ENCODE measurements at regions of chr2 and their contacts with region 1.

Region 1: DNA sequence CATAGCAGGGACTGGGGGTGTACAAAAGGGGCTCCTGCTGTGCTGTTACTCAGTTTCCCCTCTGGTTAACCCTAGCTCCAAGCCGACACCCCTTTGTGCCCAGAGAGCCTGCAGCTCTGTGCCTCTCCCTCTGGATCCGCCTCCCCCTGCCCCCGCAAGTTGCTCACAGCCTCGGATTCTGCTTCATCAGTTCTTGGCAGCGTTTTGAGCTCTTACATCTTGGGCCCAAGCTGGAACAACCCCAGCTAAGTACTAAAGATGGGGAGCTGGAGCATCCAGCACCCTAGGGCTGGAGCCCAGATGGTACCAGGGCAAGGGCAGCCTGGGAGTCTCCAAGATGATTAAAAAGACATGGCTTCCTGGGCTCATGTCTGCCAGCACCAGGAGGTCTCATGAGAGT is 40.7 kb downstream of the POMC start:
- DNase-seq: no peak
- H3K4me3 ChIP-seq: no peak overlapping the region
- H3K27ac ChIP-seq: no peak overlapping the region
- H3K4me1 ChIP-seq: peaks cover 2 to 33% (median 5%) of the 10 kb centered on the region in 3 donors
- H3K27me3 ChIP-seq: peaks cover 0 to 32% (median 3%) of the 10 kb centered on the region in 4 donors
- CTCF ChIP-seq: no peak
- POLR2A ChIP-seq: no peak

Region 2: DNA sequence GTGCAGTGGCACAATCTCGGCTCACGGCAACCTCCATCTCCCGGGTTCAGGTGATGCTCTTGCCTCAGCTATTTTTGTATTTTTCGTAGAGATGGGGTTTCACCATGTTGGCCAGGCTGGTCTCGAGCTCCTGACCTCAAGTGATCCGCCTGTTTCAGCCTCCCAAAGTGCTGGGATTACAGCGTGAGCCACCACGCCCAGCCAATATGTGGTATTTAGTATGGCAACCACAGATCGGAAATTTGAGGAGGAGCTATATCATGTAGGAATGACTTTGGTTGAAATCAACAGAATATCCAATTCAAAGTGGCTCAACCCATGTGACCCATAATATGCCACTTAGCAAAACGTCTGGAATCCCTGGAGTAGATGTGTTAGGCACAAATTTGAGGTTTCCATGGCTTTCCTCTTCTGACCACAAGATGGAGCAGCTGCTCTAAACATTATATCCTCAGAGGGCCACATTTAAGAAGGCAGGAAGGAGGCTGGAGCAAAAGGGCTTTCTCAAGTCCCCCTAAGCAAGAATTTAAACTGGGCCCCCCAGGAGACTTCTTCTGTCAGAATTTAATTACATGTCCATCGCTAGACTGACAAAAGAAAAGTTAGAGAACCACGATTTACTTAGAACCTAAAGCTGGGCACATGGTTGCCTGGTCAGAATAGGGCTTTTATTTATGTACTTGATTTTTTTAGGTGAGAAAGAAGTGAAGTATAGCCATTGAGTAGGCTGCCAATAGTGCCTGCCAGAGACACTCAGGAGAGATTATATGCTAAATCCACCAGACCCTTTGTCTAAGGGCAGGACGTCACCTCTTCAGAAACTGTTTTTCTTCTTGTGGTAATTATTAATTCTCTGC is 717.7 kb before region 1 on chr2:
- intact Hi-C with region 1: loop called (anchors 10 kb)
- DNase-seq: no peak
- H3K4me3 ChIP-seq: no peak overlapping the region
- H3K27ac ChIP-seq: no peak overlapping the region
- H3K4me1 ChIP-seq: peaks cover 0 to 6% (median 0%) of the 10 kb centered on the region in 3 donors
- H3K27me3 ChIP-seq: peaks cover 0 to 18% (median 0%) of the 10 kb centered on the region in 4 donors
- CTCF ChIP-seq: peak; percentile 71 to 88 (median 80)
- POLR2A ChIP-seq: no peak

Region 3: GRCh38 chr2:24977631-24978030 is 150.0 kb before region 1 on chr2:
- intact Hi-C with region 1: loop called (anchors 5 kb)
- DNase-seq: no peak
- H3K4me3 ChIP-seq: no peak overlapping the region
- H3K27ac ChIP-seq: no peak overlapping the region
- H3K4me1 ChIP-seq: peaks cover 0 to 16% (median 0%) of the 10 kb centered on the region in 3 donors
- H3K27me3 ChIP-seq: no peaks in the 10 kb centered on the region
- CTCF ChIP-seq: no peak
- POLR2A ChIP-seq: no peak

Region 4: GRCh38 chr2:25420820-25421237 is 293.2 kb after region 1 on chr2:
- intact Hi-C with region 1: no loop called
- DNase-seq: no peak
- H3K4me3 ChIP-seq: no peak overlapping the region
- H3K27ac ChIP-seq: peak overlapping the region in 1 of 4 donors; percentile 2
- H3K4me1 ChIP-seq: no peaks in the 10 kb centered on the region
- H3K27me3 ChIP-seq: no peaks in the 10 kb centered on the region
- CTCF ChIP-seq: no peak
- POLR2A ChIP-seq: no peak